PC-3 (cell line): ENCODE measurements at regions of chr13 and their contacts with region 1.

Region 1: DNA sequence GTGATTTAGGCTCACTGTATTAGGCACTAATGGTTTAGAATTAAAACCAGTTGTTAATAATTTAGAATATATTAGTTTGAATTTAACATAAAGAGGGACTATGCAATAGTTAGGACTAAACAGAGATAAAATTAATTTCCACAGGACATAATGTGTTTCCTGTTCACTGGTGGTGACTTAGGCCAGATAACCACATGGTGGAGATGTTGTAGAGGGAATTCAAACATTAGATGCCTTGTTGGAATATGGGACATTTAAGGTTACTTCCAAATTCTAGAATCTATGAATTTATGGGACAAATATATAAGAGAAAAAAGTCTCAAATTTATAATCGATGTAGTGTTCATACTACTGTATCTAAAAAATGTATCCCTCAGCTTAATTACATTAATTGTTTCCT is 615.5 kb upstream of the KLHL1 start:
- DNase-seq: peak; percentile 42
- ATAC-seq: peak; percentile 81
- H3K4me3 ChIP-seq: no peak overlapping the region
- H3K27ac ChIP-seq: no peak overlapping the region
- H3K4me1 ChIP-seq: no peaks in the 10 kb centered on the region
- H3K27me3 ChIP-seq: no peaks in the 10 kb centered on the region
- CTCF ChIP-seq: peak; percentile 55; the same call in 1 of the 2 replicates

Region 2: GRCh38 chr13:70623239-70623638 is 100.5 kb before region 1 on chr13:
- CTCF ChIA-PET with region 1: no interaction called
- POLR2A ChIA-PET with region 1: no interaction called
- intact Hi-C with region 1: loop called (anchors 2 kb)
- DNase-seq: peak; percentile 56
- ATAC-seq: peak; percentile 53
- H3K4me3 ChIP-seq: no peak overlapping the region
- H3K27ac ChIP-seq: no peak overlapping the region
- H3K4me1 ChIP-seq: no peaks in the 10 kb centered on the region
- H3K27me3 ChIP-seq: no peaks in the 10 kb centered on the region
- CTCF ChIP-seq: peak; percentile 59; the same call in 1 of the 2 replicates

Region 3: DNA sequence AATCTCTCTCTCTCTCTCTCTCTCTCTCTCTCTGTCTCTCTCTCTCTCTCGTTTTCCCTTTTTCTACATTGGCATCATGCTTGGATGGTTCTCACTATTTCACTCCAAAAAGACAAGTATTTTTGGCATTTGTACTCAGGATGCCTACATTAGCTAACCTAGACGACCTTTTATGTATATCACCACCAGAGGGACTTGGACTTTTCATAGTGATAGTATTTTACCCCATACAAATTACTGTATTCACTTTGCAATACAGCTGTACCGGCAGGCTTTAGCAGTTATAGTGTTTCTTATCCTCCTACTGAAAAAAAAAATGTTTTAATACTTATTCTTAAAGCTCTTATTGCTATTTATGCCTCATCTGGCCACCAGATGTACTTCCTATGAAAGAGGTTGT is 71.8 kb after region 1 on chr13:
- CTCF ChIA-PET with region 1: no interaction called
- POLR2A ChIA-PET with region 1: no interaction called
- intact Hi-C with region 1: no loop called
- DNase-seq: peak; percentile 5
- ATAC-seq: no peak
- H3K4me3 ChIP-seq: no peak overlapping the region
- H3K27ac ChIP-seq: no peak overlapping the region
- H3K4me1 ChIP-seq: no peaks in the 10 kb centered on the region
- H3K27me3 ChIP-seq: no peaks in the 10 kb centered on the region
- CTCF ChIP-seq: peak; percentile 41; the same call in 1 of the 2 replicates

Region 4: DNA sequence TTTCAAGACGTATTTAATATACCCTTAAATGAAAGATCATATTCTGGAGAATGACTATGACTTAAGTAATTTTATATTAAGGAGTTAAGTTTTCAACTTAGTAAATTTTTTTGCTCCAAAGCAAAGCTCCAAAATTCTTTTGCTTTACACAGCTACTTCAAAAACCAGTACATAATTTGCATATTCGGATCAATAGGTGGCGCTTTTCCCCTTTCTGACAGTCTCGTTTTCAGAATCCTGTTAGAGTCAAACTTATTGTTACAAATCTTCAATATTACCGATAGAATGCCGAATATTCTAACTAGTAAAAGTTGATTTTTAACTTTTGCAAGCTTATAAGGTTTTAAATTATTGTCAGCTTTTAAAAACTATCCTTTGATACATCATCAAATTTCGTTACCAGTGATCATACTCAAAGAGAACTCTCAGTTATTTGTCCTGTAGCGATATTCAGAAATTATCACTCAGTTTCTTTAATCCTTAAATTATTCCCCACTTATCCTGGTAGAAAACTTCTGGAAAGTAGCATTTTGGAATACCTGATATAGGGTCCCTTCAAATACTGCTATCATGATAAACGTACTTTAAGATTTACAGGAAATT is 237.2 kb after region 1 on chr13:
- CTCF ChIA-PET with region 1: no interaction called
- POLR2A ChIA-PET with region 1: no interaction called
- intact Hi-C with region 1: loop called (anchors 2 kb)
- DNase-seq: peak; percentile 51
- ATAC-seq: no peak
- H3K4me3 ChIP-seq: peak overlapping the region; percentile 42; the same call in 1 of the 2 replicates
- H3K27ac ChIP-seq: no peak overlapping the region
- H3K4me1 ChIP-seq: no peaks in the 10 kb centered on the region
- H3K27me3 ChIP-seq: no peaks in the 10 kb centered on the region
- CTCF ChIP-seq: peak; percentile 75

Region 5: DNA sequence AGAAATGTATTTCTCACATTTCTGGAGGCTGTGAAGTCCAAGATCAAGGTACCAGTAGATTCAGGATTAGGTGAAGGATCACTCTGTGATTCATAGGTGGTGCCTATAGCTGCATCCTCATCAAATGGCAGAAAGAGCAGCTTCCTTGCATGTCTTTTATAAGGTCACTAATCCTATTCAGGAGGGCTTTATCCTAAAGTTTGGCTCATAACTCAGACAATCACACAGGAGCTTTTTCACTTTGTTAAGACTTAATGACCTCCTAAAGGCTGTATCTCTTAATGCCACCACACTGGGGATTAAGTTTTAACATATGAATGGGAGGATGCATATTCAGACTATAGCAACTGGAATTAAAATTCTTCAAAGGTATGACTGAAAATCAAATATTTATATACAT is 282.2 kb after region 1 on chr13:
- CTCF ChIA-PET with region 1: no interaction called
- POLR2A ChIA-PET with region 1: no interaction called
- intact Hi-C with region 1: no loop called
- DNase-seq: no peak
- ATAC-seq: no peak
- H3K4me3 ChIP-seq: no peak overlapping the region
- H3K27ac ChIP-seq: no peak overlapping the region
- H3K4me1 ChIP-seq: no peaks in the 10 kb centered on the region
- H3K27me3 ChIP-seq: no peaks in the 10 kb centered on the region
- CTCF ChIP-seq: no peak

Region 6: DNA sequence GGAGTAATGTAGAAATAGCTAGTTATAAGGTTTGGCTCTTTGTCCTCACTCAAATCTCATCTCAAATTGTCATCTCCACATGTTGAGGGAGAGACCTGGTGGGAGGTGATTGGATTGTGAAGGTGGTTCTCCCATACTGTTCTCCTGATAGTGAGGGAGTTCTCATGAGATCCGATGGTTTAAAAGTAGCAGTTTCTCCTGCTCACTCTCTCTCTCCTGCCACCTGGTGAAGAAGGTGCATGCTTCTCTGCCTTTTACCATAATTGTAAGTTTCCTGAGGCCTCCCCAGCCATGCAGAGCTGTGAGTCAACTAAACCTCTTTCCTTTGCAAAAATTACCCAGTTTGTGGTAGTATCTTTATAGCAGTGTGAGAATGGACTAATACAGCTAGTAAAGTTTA is 293.9 kb after region 1 on chr13:
- CTCF ChIA-PET with region 1: no interaction called
- POLR2A ChIA-PET with region 1: no interaction called
- intact Hi-C with region 1: loop called (anchors 5 kb)
- DNase-seq: no peak
- ATAC-seq: peak; percentile 46
- H3K4me3 ChIP-seq: no peak overlapping the region
- H3K27ac ChIP-seq: no peak overlapping the region
- H3K4me1 ChIP-seq: no peaks in the 10 kb centered on the region
- H3K27me3 ChIP-seq: no peaks in the 10 kb centered on the region
- CTCF ChIP-seq: no peak

Region 7: GRCh38 chr13:71218960-71219359 is 495.2 kb after region 1 on chr13:
- CTCF ChIA-PET with region 1: no interaction called
- POLR2A ChIA-PET with region 1: no interaction called
- intact Hi-C with region 1: loop called (anchors 1 kb)
- DNase-seq: peak; percentile 48
- ATAC-seq: peak; percentile 91
- H3K4me3 ChIP-seq: no peak overlapping the region
- H3K27ac ChIP-seq: no peak overlapping the region
- H3K4me1 ChIP-seq: no peaks in the 10 kb centered on the region
- H3K27me3 ChIP-seq: no peaks in the 10 kb centered on the region
- CTCF ChIP-seq: peak; percentile 47

Region 8: GRCh38 chr13:71303144-71303543 is 579.4 kb after region 1 on chr13:
- CTCF ChIA-PET with region 1: no interaction called
- POLR2A ChIA-PET with region 1: no interaction called
- intact Hi-C with region 1: loop called (anchors 10 kb)
- DNase-seq: no peak
- ATAC-seq: peak; percentile 43; the same call in 1 of the 2 replicates
- H3K4me3 ChIP-seq: no peak overlapping the region
- H3K27ac ChIP-seq: no peak overlapping the region
- H3K4me1 ChIP-seq: no peaks in the 10 kb centered on the region
- H3K27me3 ChIP-seq: no peaks in the 10 kb centered on the region
- CTCF ChIP-seq: peak; percentile 24; the same call in 1 of the 2 replicates